ENCODE measurements at regions of chr5 and their contacts with region 1.

Region 1: GRCh38 chr5:118987988-118988865 is at the start of gene DTWD2:
- DNase-seq: peak; percentile 92
- H3K4me3 Mint-ChIP-seq: peak within 1 kb of the TSS; percentile 76
- H3K27ac Mint-ChIP-seq: peak within 1 kb of the TSS; percentile 63
- H3K4me1 Mint-ChIP-seq: peaks cover 22% of the 10 kb centered on the region
- H3K27me3 Mint-ChIP-seq: no peaks in the 10 kb centered on the region
- total RNA-seq, gene DTWD2: 4.0 to 5.5 TPM

Region 2: GRCh38 chr5:118956727-118957126 is 31.5 kb before region 1 on chr5:
- CTCF ChIA-PET with region 1: interaction called, 10 read pairs
- intact Hi-C with region 1: no loop called
- DNase-seq: no peak
- H3K4me3 Mint-ChIP-seq: no peak overlapping the region
- H3K27ac Mint-ChIP-seq: no peak overlapping the region
- H3K4me1 Mint-ChIP-seq: no peaks in the 10 kb centered on the region
- H3K27me3 Mint-ChIP-seq: no peaks in the 10 kb centered on the region

Region 3: DNA sequence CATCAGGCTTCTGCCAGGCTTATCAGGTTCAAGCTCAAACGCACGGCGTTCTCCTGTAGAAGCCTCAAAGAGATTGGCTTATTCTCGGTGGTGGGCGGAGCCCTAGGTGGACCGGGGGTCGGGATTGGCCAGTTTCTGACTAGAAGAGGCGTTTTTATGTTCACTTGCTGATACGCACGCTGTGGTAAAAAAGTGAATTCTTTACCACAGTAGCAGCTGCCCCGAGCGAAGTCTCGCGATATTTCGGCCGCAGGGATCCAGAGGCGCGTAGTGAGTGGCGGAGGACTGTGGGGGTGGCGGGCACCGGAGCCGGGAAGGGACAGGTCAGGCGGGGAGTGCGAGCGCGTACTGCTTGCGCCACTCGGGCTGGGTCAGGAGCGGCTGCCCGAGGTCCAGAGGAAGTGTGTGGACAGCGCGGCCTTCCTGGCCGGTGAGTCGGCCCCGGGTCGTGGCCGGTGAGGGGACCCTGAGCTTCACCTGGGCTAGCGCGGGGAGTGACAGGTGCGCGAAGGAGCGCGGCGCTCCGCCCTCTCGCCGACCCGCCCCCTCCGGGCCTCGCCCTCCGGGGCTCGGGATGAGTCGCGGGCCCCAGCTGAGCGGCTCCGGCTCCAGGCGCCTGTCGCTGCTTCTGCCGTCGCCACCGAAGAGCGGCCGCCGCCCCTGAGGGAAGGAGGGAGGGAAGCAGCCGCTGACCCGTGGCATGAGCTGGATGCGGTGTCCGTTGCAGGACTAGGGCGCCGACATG is 82.8 kb after region 1 on chr5 and contains the start of gene DMXL1:
- CTCF ChIA-PET with region 1: interaction called, 6 read pairs
- intact Hi-C with region 1: loop called (anchors 1 kb)
- DNase-seq: peak; percentile 100
- H3K4me3 Mint-ChIP-seq: peak within 1 kb of the TSS; percentile 95
- H3K27ac Mint-ChIP-seq: peak within 1 kb of the TSS; percentile 97
- H3K4me1 Mint-ChIP-seq: peaks cover 38% of the 10 kb centered on the region
- H3K27me3 Mint-ChIP-seq: peaks cover 2% of the 10 kb centered on the region
- total RNA-seq, gene DMXL1: 16.4 to 18.0 TPM

Region 4: GRCh38 chr5:119267958-119268386 is 279.7 kb after region 1 on chr5:
- CTCF ChIA-PET with region 1: interaction called, 9 read pairs
- intact Hi-C with region 1: loop called (anchors 1 kb)
- DNase-seq: peak; percentile 93
- H3K4me3 Mint-ChIP-seq: peak overlapping the region; percentile 91
- H3K27ac Mint-ChIP-seq: peak overlapping the region; percentile 97
- H3K4me1 Mint-ChIP-seq: peaks cover 64% of the 10 kb centered on the region
- H3K27me3 Mint-ChIP-seq: no peaks in the 10 kb centered on the region

Region 5: GRCh38 chr5:119315516-119315949 is 327.3 kb after region 1 on chr5:
- CTCF ChIA-PET with region 1: interaction called, 11 read pairs
- intact Hi-C with region 1: loop called (anchors 1 kb)
- DNase-seq: peak; percentile 83
- H3K4me3 Mint-ChIP-seq: peak overlapping the region; percentile 36
- H3K27ac Mint-ChIP-seq: peak overlapping the region; percentile 96
- H3K4me1 Mint-ChIP-seq: peaks cover 94% of the 10 kb centered on the region
- H3K27me3 Mint-ChIP-seq: no peaks in the 10 kb centered on the region

Region 6: GRCh38 chr5:119452373-119453039 is 464.3 kb after region 1 on chr5 and contains the start of gene HSD17B4:
- CTCF ChIA-PET with region 1: interaction called, 9 read pairs
- intact Hi-C with region 1: loop called (anchors 1 kb)
- DNase-seq: peak; percentile 89
- H3K4me3 Mint-ChIP-seq: peak within 1 kb of the TSS; percentile 88
- H3K27ac Mint-ChIP-seq: peak within 1 kb of the TSS; percentile 80
- H3K4me1 Mint-ChIP-seq: peaks cover 18% of the 10 kb centered on the region
- H3K27me3 Mint-ChIP-seq: no peaks in the 10 kb centered on the region
- total RNA-seq, gene HSD17B4: 85.6 to 96.3 TPM